Right cardiac atrium (tissue), 5 donors: ENCODE measurements at regions of chr3 and their contacts with region 1.

Region 1: DNA sequence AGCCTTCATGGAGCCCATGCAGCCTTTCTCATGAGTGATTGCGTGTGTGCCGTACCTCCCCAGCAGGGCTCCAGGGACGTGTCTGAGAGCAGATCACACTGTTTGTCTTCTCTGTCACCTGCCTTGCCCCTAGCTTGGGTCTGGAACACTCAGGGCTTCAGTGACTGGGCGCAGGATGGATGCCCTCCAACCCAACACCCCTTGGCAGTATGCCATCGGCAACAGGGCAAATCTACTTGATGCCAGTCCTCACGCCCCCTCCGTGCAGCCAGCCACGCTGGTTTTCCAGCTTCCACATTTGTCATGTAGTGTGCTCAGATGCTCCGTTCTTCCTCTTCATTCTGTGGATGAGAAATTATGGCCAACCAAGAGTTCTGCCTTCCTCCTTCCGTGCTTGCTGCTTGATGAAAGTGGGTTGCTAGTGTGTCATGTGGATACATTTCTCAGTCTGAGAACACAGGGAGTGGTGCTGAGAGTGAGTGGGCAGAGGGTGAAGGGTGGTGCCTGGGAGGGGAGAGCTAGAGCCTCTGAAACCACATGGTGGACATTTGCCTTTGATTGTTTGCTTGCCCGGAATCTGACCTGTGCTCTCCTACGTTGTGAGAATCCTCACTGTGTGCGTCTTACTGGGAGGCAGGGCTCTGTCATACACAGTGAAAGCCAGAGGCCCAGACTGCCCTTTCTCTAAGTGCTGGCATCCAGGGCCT is 97.2 kb downstream of the FAM43A start:
- DNase-seq: no peak
- ATAC-seq: no peak
- H3K4me3 ChIP-seq: no peak overlapping the region
- H3K27ac ChIP-seq: no peak overlapping the region
- H3K4me1 ChIP-seq: peaks cover 7% of the 10 kb centered on the region
- H3K27me3 ChIP-seq: no peaks in the 10 kb centered on the region

Region 2: DNA sequence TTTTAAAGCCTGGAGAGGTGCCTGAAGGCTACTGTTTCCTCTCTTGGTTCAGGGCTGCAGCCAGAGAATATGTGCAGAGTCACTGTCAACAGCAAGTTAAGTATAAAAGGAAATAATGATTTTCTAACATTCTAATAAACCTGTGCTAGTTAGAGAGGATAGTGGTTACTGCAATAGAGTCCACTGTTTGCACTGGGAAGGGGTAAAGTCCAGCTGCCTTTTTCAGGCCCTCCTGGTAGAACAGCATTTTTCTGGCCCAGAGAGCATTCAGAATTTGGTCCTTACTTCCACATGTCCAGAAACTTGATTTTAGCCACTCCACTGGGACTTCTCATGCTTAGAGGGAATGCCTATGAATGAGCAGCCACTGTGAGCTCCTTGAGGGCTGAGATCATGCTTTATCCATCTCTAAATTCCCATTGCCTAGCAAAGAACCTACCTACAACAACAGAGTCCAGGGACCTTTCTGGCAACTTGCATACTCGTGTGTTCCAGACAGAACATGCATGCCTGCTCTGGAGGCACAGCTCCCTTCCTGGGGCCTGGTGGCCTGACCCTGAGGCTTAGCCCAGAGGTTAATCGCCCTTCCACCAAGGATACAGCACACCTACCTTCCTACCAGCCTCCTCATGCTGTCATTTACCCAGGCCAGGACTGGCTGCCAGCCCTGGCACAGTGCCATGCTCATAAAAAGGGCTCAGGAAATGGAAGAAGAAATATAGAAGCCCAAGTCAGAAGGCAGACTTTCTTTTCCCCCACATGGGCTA is 245.8 kb before region 1 on chr3:
- intact Hi-C with region 1: no loop called
- DNase-seq: peak in 2 of 3 donors; percentile 65 to 76
- ATAC-seq: peak; percentile 29 to 51
- H3K4me3 ChIP-seq: no peak overlapping the region
- H3K27ac ChIP-seq: no peak overlapping the region
- H3K4me1 ChIP-seq: peaks cover 4% of the 10 kb centered on the region
- H3K27me3 ChIP-seq: no peaks in the 10 kb centered on the region

Region 3: DNA sequence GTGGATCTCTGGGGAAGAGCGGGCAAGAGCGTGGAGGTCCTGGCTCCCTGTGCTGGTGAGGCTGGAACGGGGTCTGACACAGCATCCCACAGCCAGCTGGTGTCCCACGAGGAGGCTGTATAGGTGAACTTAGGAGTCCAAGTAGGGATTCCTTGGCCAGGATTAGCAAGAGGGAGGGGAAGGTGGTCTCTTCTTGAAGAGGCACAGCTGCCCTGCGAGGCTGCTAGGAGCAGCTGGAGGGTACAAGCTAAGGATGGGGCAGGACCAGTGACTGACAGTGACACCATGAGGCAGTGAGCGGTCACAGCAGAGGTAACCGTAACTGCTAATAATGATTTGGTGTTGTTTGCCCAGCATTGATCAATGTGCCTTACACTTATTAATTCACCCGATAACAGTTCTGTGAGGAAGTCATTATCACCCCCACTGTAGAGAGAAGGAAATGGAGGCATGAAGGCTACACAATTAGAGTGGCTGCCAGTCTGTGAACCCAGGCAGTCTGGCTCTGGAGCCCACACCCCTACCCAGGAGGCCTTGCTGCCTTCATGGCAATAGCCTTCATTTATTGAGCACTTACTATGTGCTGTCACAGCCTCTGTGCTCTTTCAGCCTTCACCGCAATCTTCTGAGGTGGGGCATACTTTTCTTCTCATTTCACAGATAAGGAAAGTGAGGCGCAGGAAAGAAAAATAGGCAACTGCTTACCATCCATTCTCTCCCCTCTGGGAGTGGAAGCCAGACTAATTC is 209.0 kb before region 1 on chr3:
- intact Hi-C with region 1: no loop called
- DNase-seq: peak; percentile 46 to 72 (median 67)
- ATAC-seq: peak; percentile 48 to 52
- H3K4me3 ChIP-seq: no peak overlapping the region
- H3K27ac ChIP-seq: no peak overlapping the region
- H3K4me1 ChIP-seq: peaks cover 18% of the 10 kb centered on the region
- H3K27me3 ChIP-seq: no peaks in the 10 kb centered on the region

Region 4: DNA sequence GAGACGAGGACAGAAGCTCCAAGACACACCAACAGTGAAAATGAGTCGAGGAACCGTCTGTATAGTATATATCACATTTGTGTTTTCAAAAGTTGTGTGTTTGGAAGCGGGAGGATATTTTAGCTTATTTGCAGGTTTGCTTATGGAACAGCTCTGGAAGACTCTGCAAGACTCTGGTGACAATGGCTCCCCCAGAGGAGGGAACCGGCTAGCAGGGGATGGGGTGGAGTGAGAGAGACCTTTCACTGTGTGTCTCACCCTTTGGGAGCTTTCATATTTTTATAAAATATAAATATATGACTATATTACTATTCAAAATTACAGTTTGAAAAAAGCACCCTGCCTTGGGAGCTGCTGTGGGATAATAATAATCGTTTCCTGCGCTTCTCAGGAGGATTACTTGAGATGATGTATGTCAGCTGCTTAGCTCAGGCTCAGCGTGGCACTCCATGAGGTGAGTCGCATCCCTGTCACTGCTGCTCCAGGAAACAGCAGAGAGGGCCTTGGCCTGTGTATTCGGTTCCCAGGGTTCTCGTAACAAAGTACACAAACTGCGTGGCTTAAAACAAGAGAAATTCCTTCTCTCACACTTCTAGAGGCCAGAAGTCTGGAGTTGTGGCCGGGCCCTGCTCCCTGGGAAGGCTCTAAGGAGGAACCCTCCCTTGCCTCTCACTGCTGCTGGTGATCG is 86.8 kb after region 1 on chr3:
- intact Hi-C with region 1: no loop called
- DNase-seq: no peak
- ATAC-seq: no peak
- H3K4me3 ChIP-seq: no peak overlapping the region
- H3K27ac ChIP-seq: no peak overlapping the region
- H3K4me1 ChIP-seq: peaks cover 13% of the 10 kb centered on the region
- H3K27me3 ChIP-seq: no peaks in the 10 kb centered on the region

Region 5: GRCh38 chr3:194879991-194880939 is 97.4 kb after region 1 on chr3:
- intact Hi-C with region 1: loop called in 1 of 4 experiments (anchors 5 kb)
- DNase-seq: peak; percentile 80 to 93 (median 91)
- ATAC-seq: peak; percentile 90 to 92
- H3K4me3 ChIP-seq: no peak overlapping the region
- H3K27ac ChIP-seq: peak overlapping the region; percentile 68
- H3K4me1 ChIP-seq: peaks cover 15% of the 10 kb centered on the region
- H3K27me3 ChIP-seq: no peaks in the 10 kb centered on the region

Region 6: DNA sequence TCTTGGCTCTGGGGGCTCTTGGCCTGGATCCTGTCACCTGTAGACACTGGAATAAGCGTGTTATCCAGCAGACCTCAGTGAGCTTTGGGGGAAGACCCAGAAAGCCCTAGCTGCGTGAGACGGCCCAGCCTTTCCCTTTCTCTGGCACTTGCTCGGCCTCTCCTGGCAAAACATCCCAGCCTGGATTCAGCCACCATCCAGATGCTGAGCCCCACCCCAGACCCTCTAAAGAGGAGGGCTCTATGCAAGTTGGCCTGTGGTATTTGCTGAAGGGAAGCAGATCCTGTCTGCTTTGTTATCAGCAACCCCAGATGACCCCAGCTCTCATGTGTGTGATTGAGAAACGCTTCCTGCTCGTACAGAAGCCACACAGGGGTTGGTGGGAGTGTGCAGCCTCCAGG is 170.0 kb after region 1 on chr3:
- intact Hi-C with region 1: loop called in 1 of 4 experiments (anchors 10 kb)
- DNase-seq: peak in 1 of 3 donors; percentile 74
- ATAC-seq: peak; percentile 65 to 72
- H3K4me3 ChIP-seq: no peak overlapping the region
- H3K27ac ChIP-seq: no peak overlapping the region
- H3K4me1 ChIP-seq: peaks cover 11% of the 10 kb centered on the region
- H3K27me3 ChIP-seq: no peaks in the 10 kb centered on the region